Activated CD4-positive, alpha-beta memory T cell treated with anti-CD3 and anti-CD28 coated beads for 36 hours (primary cell): ENCODE measurements at regions of chr10 and their contacts with region 1.

Region 1: DNA sequence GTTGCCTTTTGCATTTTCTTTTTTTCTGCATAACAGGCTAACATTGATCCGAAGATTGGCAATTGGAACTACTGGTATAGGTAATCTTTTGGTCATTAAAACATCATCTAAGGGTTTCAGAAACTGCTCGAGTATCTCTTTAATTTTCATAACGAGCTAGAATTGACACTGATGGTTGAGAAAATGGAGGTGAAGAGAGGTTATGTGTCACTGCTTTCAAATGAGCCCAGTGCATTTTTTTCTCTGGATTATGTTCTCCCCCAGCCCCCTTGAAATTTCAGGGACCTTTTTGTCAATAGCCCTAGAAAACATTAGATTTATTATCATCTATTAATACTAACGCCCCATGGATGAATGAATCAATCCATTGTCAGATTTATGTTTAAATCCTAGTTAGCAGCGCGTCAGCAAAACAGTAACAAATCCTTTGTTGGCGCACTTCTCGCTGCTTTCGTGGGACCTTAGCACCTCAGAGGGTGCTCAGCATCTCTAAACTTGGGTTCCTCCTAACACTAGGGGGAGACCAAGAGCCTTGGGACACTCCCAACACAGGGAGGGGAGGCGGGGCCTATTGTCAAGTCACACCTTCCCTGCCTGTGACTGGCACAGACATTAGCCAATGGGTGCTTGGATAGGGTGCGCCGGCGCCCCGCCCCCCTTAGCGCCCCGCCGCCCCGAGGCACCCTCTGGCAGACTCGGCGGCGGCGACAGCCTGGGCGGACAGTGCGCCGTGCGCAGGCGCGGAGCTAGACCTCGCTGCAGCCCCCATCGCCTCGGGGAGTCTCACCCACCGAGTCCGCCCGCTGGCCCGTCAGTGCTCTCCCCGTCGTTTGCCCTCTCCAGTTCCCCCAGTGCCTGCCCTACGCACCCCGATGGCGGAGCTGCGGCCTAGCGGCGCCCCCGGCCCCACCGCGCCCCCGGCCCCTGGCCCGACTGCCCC is at the start of gene SUFU:
- DNase-seq: peak; percentile 98
- H3K4me3 Mint-ChIP-seq: peak within 1 kb of the TSS; percentile 95
- H3K27ac Mint-ChIP-seq: peak within 1 kb of the TSS; percentile 79
- H3K4me1 Mint-ChIP-seq: peaks cover 23% of the 10 kb centered on the region
- H3K27me3 Mint-ChIP-seq: no peaks in the 10 kb centered on the region
- total RNA-seq, gene SUFU: 8.2 to 10.0 TPM

Region 2: GRCh38 chr10:101060036-101060950 is 1443.3 kb before region 1 on chr10:
- CTCF ChIA-PET with region 1: no interaction called
- POLR2A ChIA-PET with region 1: no interaction called
- intact Hi-C with region 1: no loop called
- DNase-seq: peak; percentile 92
- H3K4me3 Mint-ChIP-seq: peak overlapping the region; percentile 95
- H3K27ac Mint-ChIP-seq: peak overlapping the region; percentile 85
- H3K4me1 Mint-ChIP-seq: peaks cover 17% of the 10 kb centered on the region
- H3K27me3 Mint-ChIP-seq: peaks cover 21% of the 10 kb centered on the region

Region 3: GRCh38 chr10:101818119-101818871 is 685.3 kb before region 1 on chr10 and contains the start of gene OGA:
- CTCF ChIA-PET with region 1: no interaction called
- POLR2A ChIA-PET with region 1: no interaction called
- intact Hi-C with region 1: loop called (anchors 5 kb)
- DNase-seq: peak; percentile 99
- H3K4me3 Mint-ChIP-seq: peak within 1 kb of the TSS; percentile 97
- H3K27ac Mint-ChIP-seq: peak within 1 kb of the TSS; percentile 97
- H3K4me1 Mint-ChIP-seq: peaks cover 39% of the 10 kb centered on the region
- H3K27me3 Mint-ChIP-seq: no peaks in the 10 kb centered on the region
- total RNA-seq, gene OGA: 93.2 to 105 TPM

Region 4: DNA sequence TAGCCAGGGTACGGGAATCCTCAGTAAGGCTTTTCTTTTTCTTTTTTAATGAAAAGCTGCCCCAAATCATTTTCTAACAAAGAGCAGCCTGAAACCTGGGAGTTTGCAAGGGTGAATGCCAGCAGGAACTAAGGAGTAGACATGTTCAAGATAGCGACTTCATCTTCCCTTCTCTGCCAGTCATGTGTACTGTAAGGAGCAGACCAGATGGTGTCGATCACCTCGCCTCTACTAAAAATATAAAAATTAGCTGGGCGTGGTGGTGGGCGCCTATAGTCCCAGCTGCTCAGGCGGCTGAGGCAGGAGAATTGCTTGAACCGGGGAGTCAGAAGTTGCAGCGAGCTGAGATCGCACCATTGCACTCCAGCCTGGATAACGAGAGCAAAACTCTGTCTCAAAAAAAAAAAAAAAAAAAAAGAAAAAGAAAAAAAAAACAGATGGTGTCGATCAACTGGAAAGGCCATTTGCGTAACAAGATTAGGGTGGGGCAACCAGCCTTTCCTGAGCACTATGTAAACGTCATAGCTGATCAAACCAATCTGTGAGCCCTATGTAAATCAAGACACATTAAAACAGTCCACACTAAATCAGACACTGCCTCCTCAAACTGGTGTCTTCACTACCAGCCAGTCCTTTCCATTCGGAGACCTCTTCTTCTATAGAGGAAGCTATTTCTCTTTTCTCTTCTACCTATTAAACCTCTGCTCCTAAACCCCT is 317.6 kb before region 1 on chr10:
- CTCF ChIA-PET with region 1: no interaction called
- POLR2A ChIA-PET with region 1: no interaction called
- intact Hi-C with region 1: no loop called
- DNase-seq: no peak
- H3K4me3 Mint-ChIP-seq: no peak overlapping the region
- H3K27ac Mint-ChIP-seq: no peak overlapping the region
- H3K4me1 Mint-ChIP-seq: peaks cover 14% of the 10 kb centered on the region
- H3K27me3 Mint-ChIP-seq: no peaks in the 10 kb centered on the region

Region 5: GRCh38 chr10:102245101-102245931 is 258.2 kb before region 1 on chr10 and contains the start of gene GBF1:
- CTCF ChIA-PET with region 1: no interaction called
- POLR2A ChIA-PET with region 1: interaction called, 7 read pairs
- intact Hi-C with region 1: loop called (anchors 1 kb)
- DNase-seq: peak; percentile 95
- H3K4me3 Mint-ChIP-seq: peak within 1 kb of the TSS; percentile 100
- H3K27ac Mint-ChIP-seq: peak within 1 kb of the TSS; percentile 95
- H3K4me1 Mint-ChIP-seq: peaks cover 51% of the 10 kb centered on the region
- H3K27me3 Mint-ChIP-seq: peaks cover 15% of the 10 kb centered on the region
- total RNA-seq, gene GBF1: 42.2 to 44.0 TPM

Region 6: GRCh38 chr10:102432162-102432950 is 71.2 kb before region 1 on chr10 and contains the start of gene CUEDC2:
- CTCF ChIA-PET with region 1: interaction called, 5 read pairs
- POLR2A ChIA-PET with region 1: no interaction called
- intact Hi-C with region 1: loop called (anchors 1 kb)
- DNase-seq: peak; percentile 99
- H3K4me3 Mint-ChIP-seq: peak within 1 kb of the TSS; percentile 84
- H3K27ac Mint-ChIP-seq: peak within 1 kb of the TSS; percentile 88
- H3K4me1 Mint-ChIP-seq: peaks cover 42% of the 10 kb centered on the region
- H3K27me3 Mint-ChIP-seq: no peaks in the 10 kb centered on the region
- total RNA-seq, gene CUEDC2: 68.6 to 68.9 TPM

Region 7: DNA sequence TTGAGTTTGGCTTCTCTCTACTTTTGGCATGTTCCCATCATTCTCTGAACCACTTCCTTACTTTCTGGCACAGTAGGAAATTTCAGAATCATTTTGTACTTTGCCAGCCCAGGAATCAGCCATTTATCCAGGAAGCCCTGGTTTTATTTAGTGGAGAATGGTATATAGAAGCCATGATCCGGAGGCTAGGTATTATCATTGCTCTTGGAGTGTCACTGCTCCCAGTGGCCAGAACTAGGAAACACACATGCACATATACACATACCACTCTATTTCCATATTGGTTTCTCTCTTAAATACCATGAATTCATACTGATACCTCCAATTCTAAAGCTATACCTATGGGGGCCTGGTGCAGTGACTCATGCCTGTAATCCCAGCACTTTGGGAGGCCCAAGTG is 36.5 kb after region 1 on chr10:
- CTCF ChIA-PET with region 1: interaction called, 3 read pairs
- POLR2A ChIA-PET with region 1: interaction called, 4 read pairs
- intact Hi-C with region 1: loop called (anchors 5 kb)
- DNase-seq: peak; percentile 23
- H3K4me3 Mint-ChIP-seq: no peak overlapping the region
- H3K27ac Mint-ChIP-seq: no peak overlapping the region
- H3K4me1 Mint-ChIP-seq: peaks cover 20% of the 10 kb centered on the region
- H3K27me3 Mint-ChIP-seq: no peaks in the 10 kb centered on the region

Region 8: DNA sequence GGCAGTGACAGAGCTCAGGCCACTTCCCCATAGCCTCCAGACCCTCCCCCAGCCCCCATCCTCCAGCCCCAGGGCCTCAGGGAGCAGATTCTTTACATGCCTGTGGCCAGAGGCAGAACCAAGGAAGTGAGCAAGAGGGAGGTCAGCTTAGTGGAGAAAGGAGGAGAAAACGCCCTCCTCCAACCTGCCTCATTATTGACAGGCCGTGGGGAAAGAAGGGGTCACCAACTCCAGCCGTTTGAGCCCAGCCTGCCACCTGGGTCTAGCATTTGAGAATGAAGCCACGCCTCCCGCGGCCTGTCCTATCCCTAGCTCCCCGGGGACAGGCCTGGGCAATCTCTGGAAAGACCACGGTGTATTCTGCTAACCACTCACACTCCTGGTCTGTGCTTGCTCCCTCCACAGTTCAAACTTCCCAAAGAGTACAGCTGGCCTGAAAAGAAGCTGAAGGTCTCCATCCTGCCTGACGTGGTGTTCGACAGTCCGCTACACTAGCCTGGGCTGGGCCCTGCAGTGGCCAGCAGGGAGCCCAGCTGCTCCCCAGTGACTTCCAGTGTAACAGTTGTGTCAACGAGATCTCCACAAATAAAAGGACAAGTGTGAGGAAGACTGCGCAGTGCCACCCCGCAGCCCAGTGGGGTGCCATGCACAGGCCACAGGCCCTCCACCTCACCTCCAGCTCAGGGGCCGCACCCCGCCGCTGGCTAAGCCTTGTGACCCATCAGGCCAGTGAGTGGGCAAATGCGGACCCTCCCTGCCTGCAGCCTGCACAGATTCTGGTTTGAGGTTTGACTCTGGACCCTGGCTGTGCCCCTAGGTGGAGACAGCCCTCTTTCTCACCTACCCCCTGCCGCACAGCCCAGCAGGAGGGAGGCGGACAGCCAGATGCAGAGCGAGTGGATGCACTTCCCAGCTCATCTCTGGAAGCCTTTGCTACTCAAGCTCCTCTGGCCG is 126.4 kb after region 1 on chr10:
- CTCF ChIA-PET with region 1: no interaction called
- POLR2A ChIA-PET with region 1: no interaction called
- intact Hi-C with region 1: no loop called
- DNase-seq: no peak
- H3K4me3 Mint-ChIP-seq: no peak overlapping the region
- H3K27ac Mint-ChIP-seq: no peak overlapping the region
- H3K4me1 Mint-ChIP-seq: peaks cover 34% of the 10 kb centered on the region
- H3K27me3 Mint-ChIP-seq: no peaks in the 10 kb centered on the region

Region 9: DNA sequence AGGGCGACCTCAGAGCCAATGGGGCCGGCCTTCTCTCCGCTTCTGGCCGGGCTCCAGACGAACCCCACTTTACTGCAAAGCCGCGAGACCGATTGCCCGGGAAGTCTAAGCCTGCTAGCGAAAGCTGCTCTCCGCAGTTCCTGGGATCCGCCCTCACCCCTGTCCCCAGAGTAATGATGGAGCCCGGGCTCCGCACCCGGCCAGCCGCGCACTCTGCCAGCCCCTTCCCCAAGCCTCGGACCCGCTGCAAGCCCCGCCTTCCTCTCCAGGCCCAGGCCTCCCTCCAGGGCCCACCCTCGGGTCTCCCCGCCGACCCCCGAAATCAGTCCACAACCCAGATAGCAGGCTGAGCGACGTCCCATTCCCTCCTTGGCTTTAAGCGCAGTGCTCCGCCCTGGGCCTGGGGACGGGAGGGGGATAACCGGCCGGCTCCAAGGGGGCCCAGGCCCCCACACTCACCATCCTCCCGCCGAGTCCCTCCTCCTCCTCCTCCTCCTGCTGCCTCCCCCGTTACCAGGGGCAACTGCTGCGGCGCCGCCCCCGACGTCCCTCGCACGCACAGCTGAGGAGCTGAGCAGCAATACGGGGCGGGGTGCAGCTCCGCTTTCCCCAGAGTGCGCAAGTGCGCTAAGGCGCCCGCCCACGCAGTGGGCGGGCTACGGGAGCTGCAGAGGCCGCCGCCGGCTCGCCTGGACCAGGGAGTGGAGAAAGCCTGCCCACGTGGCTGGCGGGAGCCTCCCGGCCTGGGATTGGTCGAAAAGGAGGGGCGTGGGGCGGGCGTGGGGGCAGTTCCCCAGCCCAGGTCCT is 210.5 kb after region 1 on chr10 and contains the start of gene ARL3:
- CTCF ChIA-PET with region 1: interaction called, 6 read pairs
- POLR2A ChIA-PET with region 1: no interaction called
- intact Hi-C with region 1: loop called (anchors 1 kb)
- DNase-seq: peak; percentile 99
- H3K4me3 Mint-ChIP-seq: peak within 1 kb of the TSS; percentile 84
- H3K27ac Mint-ChIP-seq: peak within 1 kb of the TSS; percentile 85
- H3K4me1 Mint-ChIP-seq: peaks cover 63% of the 10 kb centered on the region
- H3K27me3 Mint-ChIP-seq: no peaks in the 10 kb centered on the region
- total RNA-seq, gene ARL3: 10.1 to 11.1 TPM

Region 10: DNA sequence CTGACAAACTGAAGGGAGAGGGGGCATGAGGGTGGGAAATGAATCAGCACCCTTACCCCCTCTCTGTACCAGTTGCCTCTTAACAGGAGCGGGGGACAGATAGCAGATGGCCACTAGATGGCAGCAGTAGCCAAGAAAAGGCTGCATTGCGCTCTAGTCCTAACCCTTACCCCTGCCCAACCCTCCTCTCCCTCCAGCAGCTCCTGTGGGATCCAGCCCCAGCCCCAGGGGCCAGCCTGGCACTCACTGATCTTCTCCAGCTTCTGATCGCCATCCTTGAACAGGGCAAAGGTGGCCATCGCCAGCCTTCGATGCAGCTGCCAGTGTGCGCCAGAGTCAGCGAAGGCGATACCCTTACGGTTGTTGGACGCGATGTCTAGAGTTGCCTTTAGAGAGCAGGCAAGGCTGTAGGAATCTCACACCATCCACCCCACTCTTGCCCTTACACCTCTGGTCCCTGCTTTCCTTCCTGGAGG is 331.5 kb after region 1 on chr10:
- CTCF ChIA-PET with region 1: no interaction called
- POLR2A ChIA-PET with region 1: no interaction called
- intact Hi-C with region 1: no loop called
- DNase-seq: peak; percentile 82
- H3K4me3 Mint-ChIP-seq: no peak overlapping the region
- H3K27ac Mint-ChIP-seq: no peak overlapping the region
- H3K4me1 Mint-ChIP-seq: peaks cover 3% of the 10 kb centered on the region
- H3K27me3 Mint-ChIP-seq: peaks cover 3% of the 10 kb centered on the region

Region 11: DNA sequence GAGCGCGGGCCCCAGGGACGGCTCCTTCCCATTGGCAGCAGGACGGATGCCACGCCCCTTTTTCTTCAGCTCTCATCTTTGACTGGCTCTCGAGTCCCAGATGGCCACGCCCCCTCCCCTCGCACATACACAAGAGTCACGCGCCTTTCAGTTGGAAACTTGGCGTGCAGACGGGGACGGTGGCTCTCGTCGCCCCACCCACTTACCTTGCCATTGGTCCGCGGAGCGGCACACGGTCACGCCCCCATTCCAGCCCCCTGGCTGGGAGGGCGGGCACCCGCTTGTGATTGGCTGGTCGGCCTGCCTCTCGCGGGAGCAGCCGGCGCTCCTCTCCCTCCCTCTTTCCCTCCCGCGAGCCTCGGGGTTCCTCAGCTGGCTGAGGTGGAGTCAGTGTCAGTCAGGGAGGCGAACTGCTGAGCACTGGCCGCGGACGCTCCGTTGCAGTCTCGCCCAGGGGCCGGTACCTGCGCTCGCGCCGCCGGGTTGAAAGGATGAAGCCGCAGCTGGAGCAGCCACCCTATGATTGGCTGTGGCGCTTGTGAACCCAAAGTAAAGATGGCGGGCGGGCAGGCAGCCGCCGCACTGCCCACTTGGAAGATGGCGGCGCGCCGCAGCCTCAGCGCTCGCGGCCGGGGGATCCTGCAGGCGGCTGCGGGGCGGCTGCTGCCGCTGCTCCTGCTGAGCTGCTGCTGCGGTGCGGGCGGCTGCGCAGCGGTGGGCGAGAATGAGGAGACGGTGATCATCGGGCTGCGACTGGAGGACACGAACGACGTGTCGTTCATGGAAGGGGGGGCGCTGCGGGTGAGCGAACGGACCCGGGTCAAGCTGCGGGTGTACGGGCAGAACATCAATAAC is 414.6 kb after region 1 on chr10 and contains the start of gene CNNM2:
- CTCF ChIA-PET with region 1: no interaction called
- POLR2A ChIA-PET with region 1: interaction called, 3 read pairs
- intact Hi-C with region 1: loop called (anchors 5 kb)
- DNase-seq: peak; percentile 100
- H3K4me3 Mint-ChIP-seq: peak within 1 kb of the TSS; percentile 90
- H3K27ac Mint-ChIP-seq: peak within 1 kb of the TSS; percentile 84
- H3K4me1 Mint-ChIP-seq: peaks cover 45% of the 10 kb centered on the region
- H3K27me3 Mint-ChIP-seq: peaks cover 4% of the 10 kb centered on the region
- total RNA-seq, gene CNNM2: 4.0 to 4.2 TPM